Psoas muscle (tissue), 8 donors: ENCODE measurements at regions of chr5 and their contacts with region 1.

Region 1: GRCh38 chr5:146291421-146292074 is 47.1 kb upstream of the POU4F3 start:
- DNase-seq: no peak
- ATAC-seq: peak; percentile 59 to 81 (median 66)
- H3K4me3 ChIP-seq: no peak overlapping the region
- H3K27ac ChIP-seq: no peak overlapping the region
- H3K4me1 ChIP-seq: peaks cover 16% of the 10 kb centered on the region
- H3K27me3 ChIP-seq: no peaks in the 10 kb centered on the region
- CTCF ChIP-seq: peak; percentile 65

Region 2: GRCh38 chr5:146137967-146138403 is 153.6 kb before region 1 on chr5:
- intact Hi-C with region 1: no loop called
- DNase-seq: no peak
- ATAC-seq: no peak
- H3K4me3 ChIP-seq: no peak overlapping the region
- H3K27ac ChIP-seq: no peak overlapping the region
- H3K4me1 ChIP-seq: no peaks in the 10 kb centered on the region
- H3K27me3 ChIP-seq: no peaks in the 10 kb centered on the region
- CTCF ChIP-seq: no peak

Region 3: DNA sequence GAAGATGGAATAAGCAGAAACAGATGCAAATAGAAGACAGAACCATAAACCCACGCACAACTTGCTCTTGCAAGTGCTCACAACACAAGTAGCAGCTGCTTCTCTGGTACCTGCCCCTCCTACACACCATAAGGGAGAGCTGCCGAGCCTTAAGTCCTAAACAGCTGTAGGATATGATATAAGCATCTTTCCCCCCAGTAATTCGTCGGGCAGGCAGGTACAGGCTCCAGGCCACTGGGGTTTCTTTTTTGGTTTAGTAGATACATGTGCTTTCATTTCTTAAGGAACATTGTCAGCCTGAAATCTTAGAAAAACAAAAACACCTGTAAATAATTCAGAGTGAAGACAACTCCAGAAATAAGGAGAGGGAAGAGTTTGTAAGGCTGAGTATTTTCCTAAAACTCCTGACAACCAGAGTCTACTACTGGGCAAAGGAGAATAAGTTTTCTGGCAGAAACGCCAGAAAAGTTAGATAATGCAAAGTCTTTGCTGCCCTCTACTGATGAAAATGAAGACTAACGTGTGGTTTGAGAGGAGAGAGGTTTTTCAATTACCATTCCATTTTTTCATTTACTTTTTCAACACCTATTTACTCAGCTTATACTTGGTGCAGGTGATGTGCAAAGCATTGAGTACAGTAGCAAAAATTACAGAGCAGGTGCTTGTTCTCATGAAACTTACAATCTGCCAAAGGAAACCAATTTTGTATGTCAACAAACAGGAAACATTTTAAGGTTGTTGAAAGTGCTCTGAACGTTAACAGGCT is 135.5 kb after region 1 on chr5:
- intact Hi-C with region 1: loop called (anchors 2 to 5 kb)
- DNase-seq: no peak
- ATAC-seq: peak in 3 of 4 donors; percentile 61 to 85 (median 67)
- H3K4me3 ChIP-seq: no peak overlapping the region
- H3K27ac ChIP-seq: no peak overlapping the region
- H3K4me1 ChIP-seq: no peaks in the 10 kb centered on the region
- H3K27me3 ChIP-seq: no peaks in the 10 kb centered on the region
- CTCF ChIP-seq: peak; percentile 70

Region 4: GRCh38 chr5:146440870-146441495 is 149.4 kb after region 1 on chr5:
- intact Hi-C with region 1: loop called in 1 of 2 experiments (anchors 5 kb)
- DNase-seq: no peak
- ATAC-seq: peak; percentile 89 to 95 (median 94)
- H3K4me3 ChIP-seq: no peak overlapping the region
- H3K27ac ChIP-seq: peak overlapping the region; percentile 69
- H3K4me1 ChIP-seq: peaks cover 5% of the 10 kb centered on the region
- H3K27me3 ChIP-seq: no peaks in the 10 kb centered on the region
- CTCF ChIP-seq: no peak